Activated CD4-positive, alpha-beta T cell treated with anti-CD3 and anti-CD28 coated beads for 36 hours (primary cell): ENCODE measurements at regions of chr22 and their contacts with region 1.

Region 1: DNA sequence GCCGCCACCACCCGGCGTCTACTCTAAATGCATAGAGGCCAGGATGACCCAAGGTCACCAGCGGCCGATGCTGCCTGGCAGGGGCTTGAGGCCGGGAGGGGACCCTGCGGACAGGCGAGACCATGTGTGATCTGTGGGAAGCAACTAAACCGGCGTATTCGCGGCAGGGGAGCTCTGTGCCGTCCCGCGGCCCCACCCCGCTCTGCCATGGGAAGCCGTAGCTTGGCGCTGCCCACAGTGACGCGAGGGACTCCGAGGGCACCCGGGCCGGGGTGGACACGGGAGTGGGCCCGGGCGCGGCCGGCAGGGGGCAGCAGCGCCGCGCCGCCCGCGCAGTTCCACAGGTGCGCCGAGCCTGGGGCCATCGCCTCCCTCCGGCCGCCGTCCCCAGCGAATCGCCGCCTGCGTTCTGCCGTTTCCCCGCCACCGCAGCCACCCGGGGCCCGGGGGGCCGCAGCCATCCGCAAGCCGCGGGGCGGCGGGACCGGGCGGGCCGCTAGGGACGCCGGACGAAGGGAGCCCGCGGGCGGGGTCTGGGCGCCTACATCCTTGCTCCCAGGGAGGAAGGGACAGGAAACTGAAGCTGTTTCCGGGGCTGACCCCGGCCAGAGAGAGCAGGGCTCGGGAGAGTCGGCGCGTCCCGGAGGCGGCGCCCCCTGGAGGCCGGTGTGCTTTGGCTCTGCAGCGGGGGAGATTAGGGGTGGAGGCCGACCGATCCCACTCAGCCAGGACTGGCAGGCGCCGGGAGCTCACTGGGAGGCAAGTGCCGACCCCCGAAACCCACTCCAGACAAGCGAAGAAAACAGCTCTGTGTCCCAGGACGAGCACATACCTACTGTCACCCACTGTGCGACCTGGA is 12.5 kb upstream of the HDHD5 start:
- DNase-seq: peak; percentile 91
- ATAC-seq: peak; percentile 91
- H3K4me3 Mint-ChIP-seq: peak overlapping the region; percentile 78
- H3K27ac Mint-ChIP-seq: peak overlapping the region; percentile 72
- H3K4me1 Mint-ChIP-seq: peaks cover 7% of the 10 kb centered on the region
- H3K27me3 Mint-ChIP-seq: no peaks in the 10 kb centered on the region

Region 2: DNA sequence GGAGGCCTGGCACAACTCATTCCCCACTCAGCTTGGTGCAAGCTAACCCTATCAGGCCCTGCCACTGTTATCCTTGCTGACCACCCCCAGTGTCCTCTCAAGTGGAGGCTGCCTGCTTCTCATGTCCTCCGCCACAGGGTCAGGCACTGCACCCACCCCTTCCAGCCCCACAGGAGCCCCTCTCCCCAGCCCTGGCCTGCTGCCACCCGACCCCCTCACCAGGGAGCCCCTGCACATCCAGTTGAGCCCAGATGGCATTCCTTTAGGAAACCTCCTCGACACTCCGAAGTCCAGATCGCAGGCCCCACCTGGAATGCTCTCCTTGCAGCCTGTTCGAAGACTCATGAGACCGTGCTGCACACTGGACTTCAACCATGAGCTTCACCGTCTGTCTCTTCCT is 114.7 kb before region 1 on chr22:
- CTCF ChIA-PET with region 1: no interaction called
- POLR2A ChIA-PET with region 1: no interaction called
- intact Hi-C with region 1: no loop called
- DNase-seq: no peak
- ATAC-seq: no peak
- H3K4me3 Mint-ChIP-seq: no peak overlapping the region
- H3K27ac Mint-ChIP-seq: no peak overlapping the region
- H3K4me1 Mint-ChIP-seq: no peaks in the 10 kb centered on the region
- H3K27me3 Mint-ChIP-seq: no peaks in the 10 kb centered on the region

Region 3: DNA sequence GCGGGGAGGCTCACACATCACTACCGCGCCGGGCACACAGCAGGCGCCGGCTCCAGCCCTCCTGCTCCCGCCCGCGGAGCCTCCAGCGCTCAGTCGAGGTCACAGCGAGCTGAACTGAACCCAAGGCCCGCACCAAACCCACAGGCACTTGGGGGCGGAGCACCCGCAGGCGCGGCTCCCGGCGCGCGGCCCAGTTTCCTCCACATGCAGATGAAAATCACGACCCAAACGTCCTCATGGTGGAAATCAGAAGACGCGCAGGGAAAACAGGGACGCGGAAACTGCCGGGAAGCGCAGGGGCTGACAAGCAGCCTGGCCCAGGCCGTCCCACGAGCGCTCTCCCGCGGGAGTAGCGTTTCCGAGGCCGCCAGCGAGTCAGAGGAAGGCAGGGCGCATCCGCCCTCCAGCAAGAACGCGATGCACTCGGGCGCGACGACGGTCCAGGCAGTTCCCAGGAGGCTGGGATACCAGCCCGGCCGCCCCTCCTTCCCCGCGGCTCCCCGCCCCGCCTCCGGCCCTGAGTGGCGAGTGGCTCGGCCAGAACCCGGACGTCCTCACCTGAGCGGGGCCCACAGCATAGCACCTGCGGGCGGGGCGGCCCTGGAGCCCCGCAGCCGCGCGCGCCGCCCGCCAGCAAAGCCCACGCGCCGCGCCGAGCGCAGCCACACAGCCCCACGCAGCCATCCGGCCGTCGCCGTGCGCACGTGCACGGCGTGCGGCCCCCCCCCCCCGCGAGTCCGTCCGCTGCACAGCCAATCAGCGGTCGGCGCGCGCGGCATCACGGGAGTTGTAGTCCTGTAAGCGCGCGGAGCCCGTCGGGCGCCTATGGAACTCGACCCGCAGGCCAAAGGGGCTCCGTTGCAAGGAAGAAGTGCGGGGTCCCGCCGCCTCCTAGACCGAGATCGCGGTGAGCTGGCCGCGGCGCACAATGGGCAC is 12.7 kb before region 1 on chr22 and contains the start of gene HDHD5:
- CTCF ChIA-PET with region 1: interaction called, 64 read pairs
- POLR2A ChIA-PET with region 1: interaction called, 5 read pairs
- intact Hi-C with region 1: loop called (anchors 1 kb)
- DNase-seq: peak; percentile 94
- ATAC-seq: peak; percentile 82
- H3K4me3 Mint-ChIP-seq: peak within 1 kb of the TSS; percentile 84
- H3K27ac Mint-ChIP-seq: peak within 1 kb of the TSS; percentile 87
- H3K4me1 Mint-ChIP-seq: peaks cover 32% of the 10 kb centered on the region
- H3K27me3 Mint-ChIP-seq: no peaks in the 10 kb centered on the region
- total RNA-seq, gene HDHD5: 51.6 to 69.0 TPM

Region 4: GRCh38 chr22:17303840-17304779 is 132.6 kb after region 1 on chr22:
- CTCF ChIA-PET with region 1: interaction called, 10 read pairs
- POLR2A ChIA-PET with region 1: no interaction called
- intact Hi-C with region 1: no loop called
- DNase-seq: peak; percentile 80
- ATAC-seq: peak; percentile 92
- H3K4me3 Mint-ChIP-seq: peak overlapping the region; percentile 28
- H3K27ac Mint-ChIP-seq: peak overlapping the region; percentile 94
- H3K4me1 Mint-ChIP-seq: peaks cover 18% of the 10 kb centered on the region
- H3K27me3 Mint-ChIP-seq: no peaks in the 10 kb centered on the region

Region 5: GRCh38 chr22:17381237-17381914 is 209.8 kb after region 1 on chr22:
- CTCF ChIA-PET with region 1: no interaction called
- POLR2A ChIA-PET with region 1: no interaction called
- intact Hi-C with region 1: no loop called
- DNase-seq: no peak
- ATAC-seq: no peak
- H3K4me3 Mint-ChIP-seq: no peak overlapping the region
- H3K27ac Mint-ChIP-seq: no peak overlapping the region
- H3K4me1 Mint-ChIP-seq: no peaks in the 10 kb centered on the region
- H3K27me3 Mint-ChIP-seq: peaks cover 4% of the 10 kb centered on the region

Region 6: GRCh38 chr22:17501679-17502285 is 330.2 kb after region 1 on chr22:
- CTCF ChIA-PET with region 1: interaction called, 39 read pairs
- POLR2A ChIA-PET with region 1: no interaction called
- intact Hi-C with region 1: loop called (anchors 1 kb)
- DNase-seq: peak; percentile 20
- ATAC-seq: peak; percentile 63
- H3K4me3 Mint-ChIP-seq: no peak overlapping the region
- H3K27ac Mint-ChIP-seq: no peak overlapping the region
- H3K4me1 Mint-ChIP-seq: no peaks in the 10 kb centered on the region
- H3K27me3 Mint-ChIP-seq: peaks cover 6% of the 10 kb centered on the region